ENCODE measurements at regions of chr4 and their contacts with region 1.

Region 1: GRCh38 chr4:150242820-150243458 is 164.7 kb downstream of the DCLK2 start:
- DNase-seq: peak; percentile 68
- H3K4me3 ChIP-seq: no peak overlapping the region
- H3K27ac ChIP-seq: peak overlapping the region in 1 of 4 donors; percentile 13
- H3K4me1 ChIP-seq: peaks cover 0 to under 1% (median 0%) of the 10 kb centered on the region in 4 donors
- H3K27me3 ChIP-seq: no peaks in the 10 kb centered on the region
- CTCF ChIP-seq: peak; percentile 80 to 92 (median 83)
- EP300 ChIP-seq: no peak
- POLR2A ChIP-seq: no peak

Region 2: DNA sequence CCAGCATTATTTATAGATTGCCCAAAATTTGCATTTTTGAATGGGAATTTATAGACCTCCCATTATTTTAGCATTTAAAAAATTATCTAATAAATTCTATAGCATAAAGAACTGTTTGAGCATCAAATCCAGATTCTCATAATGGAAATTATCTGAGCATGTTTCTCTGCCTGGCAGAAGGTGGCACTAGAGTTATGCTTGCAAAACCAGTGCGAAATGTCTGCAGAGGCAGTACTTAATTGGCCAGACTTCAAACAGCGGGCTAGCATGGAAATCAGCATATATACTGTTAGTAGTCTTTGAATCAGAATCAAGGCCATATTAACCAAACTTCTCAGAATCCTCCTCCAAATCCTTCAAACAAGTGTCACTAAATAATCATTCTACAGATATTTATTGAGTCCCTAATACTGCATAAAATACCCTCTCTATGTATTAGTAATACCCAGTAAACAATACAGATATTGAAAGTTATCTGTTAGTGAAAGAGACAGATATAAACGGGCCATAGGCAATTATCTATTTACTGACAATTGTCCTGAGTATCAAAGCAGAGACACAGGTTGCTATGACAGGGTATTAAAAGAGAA is 243.4 kb before region 1 on chr4:
- intact Hi-C with region 1: loop called (anchors 2 kb)
- DNase-seq: no peak
- H3K4me3 ChIP-seq: no peak overlapping the region
- H3K27ac ChIP-seq: no peak overlapping the region
- H3K4me1 ChIP-seq: peaks cover 0 to 37% (median 30%) of the 10 kb centered on the region in 4 donors
- H3K27me3 ChIP-seq: no peaks in the 10 kb centered on the region
- CTCF ChIP-seq: peak; percentile 79 to 83 (median 81)
- EP300 ChIP-seq: no peak
- POLR2A ChIP-seq: no peak